ENCODE measurements at regions of chr4 and their contacts with region 1.

Region 1: GRCh38 chr4:153318696-153319320 is 25.7 kb upstream of the MND1 start:
- DNase-seq: peak in 4 of 5 donors; percentile 36 to 49 (median 40)
- H3K4me3 ChIP-seq: no peak overlapping the region
- H3K4me3 Mint-ChIP-seq: no peak overlapping the region
- H3K27ac ChIP-seq: no peak overlapping the region
- H3K27ac Mint-ChIP-seq: no peak overlapping the region
- H3K4me1 ChIP-seq: no peaks in the 10 kb centered on the region
- H3K4me1 Mint-ChIP-seq: peaks cover 0 to 2% (median 0%) of the 10 kb centered on the region in 4 donors
- H3K27me3 ChIP-seq: no peaks in the 10 kb centered on the region
- H3K27me3 Mint-ChIP-seq: peaks cover 0 to 1% of the 10 kb centered on the region in 2 donors

Region 2: DNA sequence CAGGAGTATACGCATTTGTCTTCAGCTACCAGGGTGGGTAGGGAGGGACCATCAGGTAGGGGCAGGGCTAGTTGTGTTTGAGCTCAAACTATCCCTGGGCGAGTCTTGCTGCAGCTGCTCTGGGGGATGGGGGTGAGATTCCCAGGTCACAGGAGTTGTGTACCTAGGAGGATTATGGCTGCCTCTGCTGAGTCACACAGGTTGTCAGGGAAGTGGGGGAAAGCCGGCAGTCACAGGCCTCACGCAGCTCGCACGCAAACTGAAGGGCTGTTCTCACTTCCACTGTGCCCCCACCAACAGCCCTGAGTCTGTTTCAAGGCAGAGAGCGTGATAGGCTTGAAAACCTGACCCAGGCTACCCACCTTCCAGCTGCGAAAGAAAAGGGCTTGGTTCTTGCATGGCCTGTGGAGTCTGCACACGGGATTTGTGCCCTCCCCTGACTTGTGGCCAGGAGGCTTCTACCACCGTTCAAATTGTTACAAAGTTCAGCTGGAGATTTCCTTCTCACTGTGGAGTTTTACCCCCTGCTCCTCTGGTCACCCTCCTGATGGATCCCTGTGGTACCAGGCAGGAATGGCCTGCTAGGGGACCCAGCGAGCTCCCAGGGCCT is 475.2 kb before region 1 on chr4:
- CTCF ChIA-PET with region 1: no interaction called
- POLR2A ChIA-PET with region 1: no interaction called
- intact Hi-C with region 1: loop called (anchors 10 kb)
- DNase-seq: no peak
- H3K4me3 ChIP-seq: no peak overlapping the region
- H3K4me3 Mint-ChIP-seq: no peak overlapping the region
- H3K27ac ChIP-seq: no peak overlapping the region
- H3K27ac Mint-ChIP-seq: no peak overlapping the region
- H3K4me1 ChIP-seq: peaks cover 14% of the 10 kb centered on the region
- H3K4me1 Mint-ChIP-seq: peaks cover 14 to 23% (median 21%) of the 10 kb centered on the region in 4 donors
- H3K27me3 ChIP-seq: no peaks in the 10 kb centered on the region
- H3K27me3 Mint-ChIP-seq: no peaks in the 10 kb centered on the region

Region 3: GRCh38 chr4:153142700-153143438 is 175.9 kb before region 1 on chr4:
- CTCF ChIA-PET with region 1: interaction called, 32 read pairs
- POLR2A ChIA-PET with region 1: no interaction called
- intact Hi-C with region 1: loop called (anchors 1 kb)
- DNase-seq: peak; percentile 63 to 68 (median 64)
- H3K4me3 ChIP-seq: no peak overlapping the region
- H3K4me3 Mint-ChIP-seq: no peak overlapping the region
- H3K27ac ChIP-seq: no peak overlapping the region
- H3K27ac Mint-ChIP-seq: no peak overlapping the region
- H3K4me1 ChIP-seq: peaks cover 4% of the 10 kb centered on the region
- H3K4me1 Mint-ChIP-seq: peaks cover 0 to 12% (median 5%) of the 10 kb centered on the region in 4 donors
- H3K27me3 ChIP-seq: no peaks in the 10 kb centered on the region
- H3K27me3 Mint-ChIP-seq: no peaks in the 10 kb centered on the region

Region 4: GRCh38 chr4:153661211-153661822 is 342.5 kb after region 1 on chr4:
- CTCF ChIA-PET with region 1: no interaction called
- POLR2A ChIA-PET with region 1: no interaction called
- intact Hi-C with region 1: no loop called
- DNase-seq: no peak
- H3K4me3 ChIP-seq: no peak overlapping the region
- H3K4me3 Mint-ChIP-seq: no peak overlapping the region
- H3K27ac ChIP-seq: no peak overlapping the region
- H3K27ac Mint-ChIP-seq: no peak overlapping the region
- H3K4me1 ChIP-seq: no peaks in the 10 kb centered on the region
- H3K4me1 Mint-ChIP-seq: no peaks in the 10 kb centered on the region
- H3K27me3 ChIP-seq: no peaks in the 10 kb centered on the region
- H3K27me3 Mint-ChIP-seq: peaks cover 4% of the 10 kb centered on the region in 2 donors

Measured in CD4-positive, alpha-beta memory T cell (primary cell).